Heart right ventricle (tissue), 16 donors: ENCODE measurements at regions of chr20 and their contacts with region 1.

Region 1: DNA sequence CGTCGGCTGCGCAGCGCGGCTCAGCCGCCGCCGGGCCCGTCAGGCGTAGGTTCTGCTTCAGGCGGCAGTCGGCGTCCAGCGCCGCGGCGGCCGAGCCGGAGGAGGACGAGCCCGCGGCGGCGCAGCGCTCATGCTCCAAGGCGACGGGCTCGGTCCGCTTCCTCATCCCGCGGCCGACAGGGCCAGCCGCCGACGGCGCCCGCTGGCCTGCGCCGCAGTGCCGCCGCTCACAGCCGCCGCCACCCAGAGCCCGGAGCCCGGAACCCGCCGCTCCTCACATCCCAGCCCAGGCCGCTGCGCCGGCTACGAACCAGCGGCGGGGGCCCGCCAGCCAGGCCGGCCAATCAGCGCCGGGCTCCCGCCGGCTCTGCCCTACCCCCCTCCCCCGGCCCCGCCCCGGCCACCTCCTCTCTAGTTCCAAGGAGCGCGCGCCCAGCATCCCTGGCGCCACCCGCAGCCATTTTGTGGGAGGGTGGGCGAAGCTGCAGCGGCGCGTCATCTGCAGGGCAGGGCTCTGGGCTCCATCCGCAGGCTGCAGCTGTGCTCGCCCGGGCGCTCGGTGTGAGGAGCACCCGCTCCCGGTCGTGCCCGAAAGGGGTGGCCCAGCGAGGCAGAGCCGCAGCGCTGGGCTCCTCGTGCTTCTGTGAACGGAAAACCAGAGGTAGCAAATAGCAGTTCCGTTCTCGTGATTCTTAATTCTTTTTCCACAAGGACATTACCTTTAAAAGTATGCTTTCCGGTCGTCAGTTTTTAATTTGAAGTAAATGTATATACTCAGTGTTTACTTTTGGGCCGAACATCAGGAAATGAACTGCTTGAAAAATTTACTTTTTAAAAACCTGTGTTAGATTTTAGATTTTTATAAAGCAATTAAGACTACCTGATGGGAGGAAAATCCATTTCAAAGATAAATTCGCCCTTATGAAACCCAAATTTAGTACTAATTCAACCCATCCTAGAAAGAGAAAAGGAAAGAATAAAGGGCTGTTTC is at the start of gene ABHD12:
- DNase-seq: peak; percentile 96 to 97
- ATAC-seq: peak; percentile 98 to 100 (median 99)
- H3K4me3 ChIP-seq: peak within 1 kb of the TSS; percentile 61 to 99 (median 91)
- H3K27ac ChIP-seq: peak within 1 kb of the TSS; percentile 31 to 94 (median 88)
- H3K4me1 ChIP-seq: peaks cover 0 to 20% (median 18%) of the 10 kb centered on the region in 9 donors
- H3K27me3 ChIP-seq: no peaks in the 10 kb centered on the region
- CTCF ChIP-seq: peak in 3 of 9 donors; percentile 12 to 28 (median 15)
- total RNA-seq, gene ABHD12: 21.1 to 41.3 (median 26.9) TPM

Region 2: DNA sequence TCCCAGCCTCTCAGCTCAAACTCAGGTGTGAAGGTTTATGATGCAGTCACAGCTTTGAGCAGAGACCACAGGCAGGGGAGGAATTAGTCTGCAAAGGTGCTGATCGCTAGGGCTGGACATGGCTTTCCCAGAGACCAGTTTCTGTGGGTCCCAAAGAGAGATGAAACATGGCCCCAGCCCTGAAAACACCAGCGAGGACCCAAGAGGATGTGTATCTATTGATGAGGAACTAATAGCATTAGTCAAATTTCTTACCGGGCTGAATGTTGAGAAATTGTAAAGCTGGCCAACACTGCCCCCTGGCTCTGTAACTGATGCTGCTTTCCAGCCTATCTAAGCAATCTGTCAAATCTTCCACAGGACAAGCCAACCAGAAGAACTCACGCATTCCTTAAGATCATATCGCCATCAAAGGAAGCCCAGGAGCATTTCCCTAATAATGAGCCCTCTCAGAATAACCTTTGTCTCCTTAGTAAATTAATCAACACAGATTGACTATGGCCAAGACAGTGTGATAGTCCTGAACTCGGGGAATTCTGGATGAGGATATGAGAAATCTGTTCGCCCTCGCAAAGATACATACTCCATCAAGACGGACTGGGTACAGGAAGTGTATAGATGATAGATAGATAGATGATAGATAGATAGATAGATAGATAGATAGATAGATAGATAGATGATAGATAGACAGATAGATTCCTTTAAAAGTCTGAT is 325.1 kb before region 1 on chr20:
- intact Hi-C with region 1: loop called in 4 of 10 experiments (anchors 10 kb)
- DNase-seq: peak; percentile 37 to 60
- ATAC-seq: peak; percentile 53 to 92 (median 79)
- H3K4me3 ChIP-seq: no peak overlapping the region
- H3K27ac ChIP-seq: peak overlapping the region in 1 of 10 donors; percentile 1
- H3K4me1 ChIP-seq: peaks cover 0 to 20% (median 11%) of the 10 kb centered on the region in 9 donors
- H3K27me3 ChIP-seq: peaks cover 0 to 36% (median 10%) of the 10 kb centered on the region in 7 donors
- CTCF ChIP-seq: peak; percentile 69 to 94 (median 81)

Region 3: DNA sequence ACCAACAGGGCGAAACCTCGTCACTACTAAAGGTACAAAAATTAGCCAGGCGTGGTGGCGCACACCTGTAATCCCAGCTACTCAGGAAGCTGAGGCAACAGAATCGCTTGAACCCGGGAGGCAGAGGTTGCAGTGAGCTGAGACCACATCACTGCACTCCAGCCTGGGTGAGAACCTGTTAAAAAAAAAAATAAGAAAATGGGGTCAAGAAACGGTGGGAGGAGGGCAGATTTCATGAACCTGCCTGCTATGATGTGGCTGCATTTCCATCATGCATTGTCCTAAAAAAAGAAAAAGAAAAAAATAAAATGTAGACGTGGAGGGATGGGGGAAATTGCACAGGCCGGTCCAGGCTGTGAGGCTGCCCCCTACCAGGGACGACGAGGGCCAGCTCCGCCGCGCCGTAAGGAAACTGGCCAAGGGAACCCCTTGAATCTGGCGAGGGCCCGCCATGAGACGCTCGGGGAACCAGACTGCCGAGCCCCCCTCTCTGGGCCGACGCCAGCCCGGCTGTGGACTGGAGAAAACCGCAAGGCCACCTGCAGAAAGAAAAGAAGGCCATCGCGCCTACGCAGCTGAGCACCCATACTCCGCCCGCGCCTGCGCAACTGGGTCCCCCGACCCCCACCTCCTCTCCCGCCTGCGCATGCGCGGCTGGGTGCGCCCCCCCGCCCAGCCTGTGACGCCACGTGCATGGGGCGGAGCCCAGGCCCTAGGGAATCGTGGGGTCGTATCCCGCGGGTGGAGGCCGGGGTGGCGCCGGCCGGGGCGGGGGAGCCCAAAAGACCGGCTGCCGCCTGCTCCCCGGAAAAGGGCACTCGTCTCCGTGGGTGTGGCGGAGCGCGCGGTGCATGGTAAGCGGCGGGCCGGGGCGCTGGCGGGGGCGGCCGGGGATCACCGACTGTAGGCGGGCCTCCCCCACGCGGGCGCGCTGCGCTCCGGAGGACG is 195.5 kb before region 1 on chr20 and contains the start of gene ENTPD6:
- intact Hi-C with region 1: loop called in 5 of 10 experiments (anchors 5 to 10 kb)
- DNase-seq: peak; percentile 92 to 97
- ATAC-seq: peak; percentile 83 to 93 (median 92)
- H3K4me3 ChIP-seq: peak within 1 kb of the TSS; percentile 75 to 99 (median 92)
- H3K27ac ChIP-seq: peak within 1 kb of the TSS; percentile 84 to 97 (median 93)
- H3K4me1 ChIP-seq: peaks cover 15 to 72% (median 51%) of the 10 kb centered on the region in 9 donors
- H3K27me3 ChIP-seq: no peaks in the 10 kb centered on the region
- CTCF ChIP-seq: peak in 5 of 9 donors; percentile 13 to 51 (median 36)
- total RNA-seq, gene ENTPD6: 54.6 to 141 (median 78.0) TPM

Region 4: GRCh38 chr20:25310268-25310920 is 80.4 kb before region 1 on chr20:
- intact Hi-C with region 1: loop called in 3 of 10 experiments (anchors 10 kb)
- DNase-seq: no peak
- ATAC-seq: peak; percentile 68 to 84 (median 82)
- H3K4me3 ChIP-seq: peak overlapping the region in 6 of 10 donors; percentile 9 to 30 (median 26)
- H3K27ac ChIP-seq: peak overlapping the region in 8 of 10 donors; percentile 19 to 86 (median 72)
- H3K4me1 ChIP-seq: peaks cover 15 to 38% (median 26%) of the 10 kb centered on the region in 9 donors
- H3K27me3 ChIP-seq: no peaks in the 10 kb centered on the region
- CTCF ChIP-seq: peak in 6 of 9 donors; percentile 18 to 56 (median 48)

Region 5: GRCh38 chr20:25341716-25342680 is 48.8 kb before region 1 on chr20:
- intact Hi-C with region 1: loop called in 1 of 10 experiments (anchors 10 kb)
- DNase-seq: no peak
- ATAC-seq: no peak
- H3K4me3 ChIP-seq: no peak overlapping the region
- H3K27ac ChIP-seq: no peak overlapping the region
- H3K4me1 ChIP-seq: peaks cover 0 to 10% (median 0%) of the 10 kb centered on the region in 9 donors
- H3K27me3 ChIP-seq: no peaks in the 10 kb centered on the region
- CTCF ChIP-seq: no peak